ENCODE measurements at regions of chr10 and their contacts with region 1.

Region 1: DNA sequence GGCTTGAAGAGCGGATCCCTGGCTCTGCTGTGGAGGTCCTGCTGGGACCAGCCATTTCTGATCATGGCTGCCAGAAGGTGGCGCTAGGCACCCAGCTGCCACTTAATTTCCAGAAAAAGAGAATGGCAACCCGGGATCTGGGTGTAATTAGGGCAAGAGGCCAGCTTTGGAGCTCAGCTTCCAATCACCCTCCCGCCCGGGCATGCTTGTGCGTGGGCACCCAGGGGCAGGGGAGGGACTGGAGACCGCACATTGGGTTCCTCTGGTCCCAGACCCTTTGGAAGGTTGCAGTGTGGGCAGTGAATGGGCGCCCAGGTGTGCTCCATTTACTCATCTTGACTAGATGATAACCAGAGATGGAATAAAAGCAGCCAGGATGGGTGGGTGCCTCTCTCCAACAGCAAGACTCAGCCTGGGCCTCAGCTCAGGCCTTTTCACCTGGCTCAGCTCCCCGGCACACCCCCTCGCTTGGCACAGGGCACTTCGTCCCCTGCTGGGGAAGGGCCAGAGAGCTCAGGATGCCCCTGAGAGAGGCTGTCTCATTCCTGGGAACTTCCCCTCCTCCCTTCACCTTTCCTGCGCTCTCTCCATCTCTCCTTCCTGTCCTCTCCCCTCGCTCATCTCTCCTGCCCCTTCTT is 14.7 kb downstream of the FAM241B start:
- DNase-seq: peak; percentile 68
- ATAC-seq: no peak
- H3K4me3 Mint-ChIP-seq: no peak overlapping the region
- H3K27ac Mint-ChIP-seq: no peak overlapping the region
- H3K4me1 Mint-ChIP-seq: no peaks in the 10 kb centered on the region
- H3K27me3 Mint-ChIP-seq: no peaks in the 10 kb centered on the region
- CTCF ChIP-seq: peak; percentile 82

Region 2: DNA sequence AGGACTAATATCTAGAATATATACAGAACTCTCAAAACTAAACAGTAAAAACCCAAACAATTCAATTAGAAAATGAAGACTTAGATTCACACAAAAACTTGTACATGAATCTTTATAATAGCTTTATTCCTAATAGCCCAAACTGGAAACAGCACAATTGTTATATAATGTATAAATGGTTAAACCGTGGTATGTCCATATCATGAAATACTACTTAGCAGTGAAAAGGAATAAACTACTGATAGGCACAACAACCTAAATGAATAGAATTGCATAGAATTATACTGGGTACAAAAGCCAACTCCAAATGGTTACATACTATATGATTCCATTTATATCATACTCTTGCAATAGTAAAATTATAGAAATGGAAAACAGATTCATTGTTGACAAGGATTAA is 35.7 kb before region 1 on chr10:
- CTCF ChIA-PET with region 1: no interaction called
- POLR2A ChIA-PET with region 1: no interaction called
- intact Hi-C with region 1: no loop called
- DNase-seq: no peak
- ATAC-seq: no peak
- H3K4me3 Mint-ChIP-seq: no peak overlapping the region
- H3K27ac Mint-ChIP-seq: no peak overlapping the region
- H3K4me1 Mint-ChIP-seq: no peaks in the 10 kb centered on the region
- H3K27me3 Mint-ChIP-seq: no peaks in the 10 kb centered on the region
- CTCF ChIP-seq: no peak

Region 3: DNA sequence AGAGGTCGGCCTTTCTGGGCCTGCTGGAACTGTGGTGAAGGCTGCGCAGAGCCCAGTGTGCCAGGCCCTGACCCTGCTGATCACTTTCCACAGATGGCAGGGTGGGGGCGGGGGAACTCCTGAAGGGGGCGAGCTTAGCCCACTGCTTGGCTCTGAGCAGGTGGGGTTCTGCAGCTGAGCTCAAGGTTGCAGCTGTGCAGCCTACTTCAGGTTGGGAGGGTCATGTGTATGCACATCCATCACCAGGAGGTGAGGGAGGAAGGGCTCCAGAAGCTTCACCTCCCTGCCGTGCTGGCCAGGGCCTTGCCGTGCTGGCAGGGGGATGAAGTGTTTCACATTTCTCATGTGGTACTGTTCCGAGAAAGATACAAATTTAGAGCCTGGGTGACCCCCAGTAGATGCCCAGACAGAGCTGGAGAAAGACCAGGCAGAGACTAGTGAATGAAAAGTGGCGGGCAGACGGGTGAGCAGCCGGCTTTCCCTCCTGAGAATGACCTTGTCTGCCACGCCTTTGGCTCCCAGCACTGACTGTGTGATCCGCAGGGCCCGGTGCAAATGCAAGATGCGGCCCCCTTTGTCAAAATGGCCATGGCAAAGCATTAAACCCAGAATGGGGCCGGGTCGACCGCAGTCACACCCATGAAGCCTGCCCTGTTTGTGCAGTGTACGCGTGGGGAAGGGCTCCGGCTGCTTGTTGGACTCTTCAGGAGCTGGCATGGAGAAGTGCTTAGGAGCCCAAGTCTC is 10.5 kb after region 1 on chr10:
- CTCF ChIA-PET with region 1: interaction called, 12 read pairs
- POLR2A ChIA-PET with region 1: no interaction called
- intact Hi-C with region 1: no loop called
- DNase-seq: no peak
- ATAC-seq: no peak
- H3K4me3 Mint-ChIP-seq: no peak overlapping the region
- H3K27ac Mint-ChIP-seq: no peak overlapping the region
- H3K4me1 Mint-ChIP-seq: peaks cover 12% of the 10 kb centered on the region
- H3K27me3 Mint-ChIP-seq: peaks cover 7% of the 10 kb centered on the region
- CTCF ChIP-seq: no peak

Region 4: DNA sequence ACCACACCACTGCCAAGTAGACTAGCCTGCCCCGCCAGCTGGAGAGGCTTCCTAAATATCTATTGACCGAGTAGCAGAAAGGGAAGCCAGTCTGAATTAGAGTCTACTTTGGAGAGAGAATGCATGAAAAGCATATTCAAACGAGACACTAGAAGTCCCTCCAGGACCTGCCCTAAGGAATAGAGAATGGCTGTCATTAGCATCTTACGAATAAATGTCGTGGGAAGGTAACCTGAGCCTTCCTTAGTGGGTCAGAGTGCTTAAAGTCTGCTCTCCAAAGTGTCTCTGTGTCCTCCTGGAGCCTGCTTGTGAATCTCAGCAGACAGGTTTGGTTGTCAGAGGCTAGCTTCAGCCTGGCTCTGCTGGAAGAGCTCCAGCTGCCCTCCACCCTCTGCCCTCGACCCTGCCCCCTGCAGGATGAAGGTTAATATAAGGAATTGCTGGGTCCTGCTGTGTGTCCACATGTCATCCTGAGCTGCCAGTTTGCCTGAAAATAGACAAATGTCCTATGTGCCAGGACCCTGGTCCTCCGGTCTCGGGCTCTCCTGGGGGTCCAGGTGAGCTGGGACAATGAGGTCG is 18.7 kb after region 1 on chr10:
- CTCF ChIA-PET with region 1: interaction called, 10 read pairs
- POLR2A ChIA-PET with region 1: no interaction called
- intact Hi-C with region 1: no loop called
- DNase-seq: peak; percentile 10
- ATAC-seq: no peak
- H3K4me3 Mint-ChIP-seq: no peak overlapping the region
- H3K27ac Mint-ChIP-seq: no peak overlapping the region
- H3K4me1 Mint-ChIP-seq: no peaks in the 10 kb centered on the region
- H3K27me3 Mint-ChIP-seq: peaks cover 10% of the 10 kb centered on the region
- CTCF ChIP-seq: no peak